Tibial artery (tissue), 4 donors: ENCODE measurements at regions of chr1 and their contacts with region 1.

Region 1: GRCh38 chr1:165914136-165914798 is 86.9 kb downstream of the UCK2 start:
- DNase-seq: peak in 1 of 2 donors; percentile 70
- H3K4me3 ChIP-seq: no peak overlapping the region
- H3K27ac ChIP-seq: no peak overlapping the region
- H3K4me1 ChIP-seq: peaks cover 0 to 5% (median 2%) of the 10 kb centered on the region in 4 donors
- H3K27me3 ChIP-seq: no peaks in the 10 kb centered on the region
- CTCF ChIP-seq: peak; percentile 84 to 92

Region 2: DNA sequence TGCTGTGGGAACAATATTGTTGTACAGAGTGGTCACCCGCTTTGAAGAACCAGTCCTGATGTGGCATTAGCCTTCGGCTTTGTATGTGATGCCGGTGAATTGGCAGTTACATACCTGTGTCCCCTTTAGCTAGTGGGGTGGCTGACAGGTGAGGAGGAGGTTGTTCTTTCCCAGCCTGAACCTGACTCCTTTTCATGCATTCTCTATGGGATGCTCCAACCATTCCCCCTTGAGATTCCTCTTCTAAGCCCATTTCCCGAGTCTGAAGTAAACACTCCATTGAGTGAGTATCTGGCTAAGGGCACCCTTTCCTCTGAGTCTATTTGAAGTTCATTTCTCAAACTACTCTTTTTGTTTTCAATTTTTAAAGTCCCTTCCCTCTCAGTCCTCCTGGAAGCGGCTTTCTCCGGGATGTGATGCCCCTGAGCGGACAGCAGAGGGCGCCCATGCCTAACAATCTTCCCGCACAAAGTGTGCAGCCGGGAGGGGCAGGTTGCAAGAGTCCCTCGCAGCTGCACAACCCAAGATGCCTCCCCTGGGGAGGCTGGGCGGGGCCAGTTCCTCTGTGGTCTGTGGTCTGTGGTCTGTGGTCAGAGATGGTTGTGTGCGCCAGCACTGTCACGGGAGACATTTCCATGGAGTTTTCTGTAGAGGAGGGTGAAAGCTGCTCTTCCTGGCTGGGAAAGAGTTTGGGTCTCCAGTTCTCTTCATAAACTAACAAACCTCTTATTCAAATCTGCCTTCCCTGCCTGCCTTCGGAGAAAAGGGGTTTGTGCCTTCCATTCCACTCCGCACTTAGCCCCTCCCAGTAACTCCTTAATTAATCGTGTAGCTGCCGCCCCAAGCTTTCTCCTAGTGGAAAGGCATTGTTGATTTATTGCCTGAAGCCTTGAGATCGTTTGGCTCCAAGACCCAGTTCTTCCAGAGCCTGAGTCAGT is 521.4 kb before region 1 on chr1:
- intact Hi-C with region 1: loop called (anchors 5 kb)
- DNase-seq: peak; percentile 91 to 92
- H3K4me3 ChIP-seq: peak overlapping the region in 1 of 2 donors; percentile 8
- H3K27ac ChIP-seq: no peak overlapping the region
- H3K4me1 ChIP-seq: peaks cover 0 to 7% (median 2%) of the 10 kb centered on the region in 4 donors
- H3K27me3 ChIP-seq: peaks cover 0 to 15% of the 10 kb centered on the region in 2 donors
- CTCF ChIP-seq: peak; percentile 90 to 93

Region 3: DNA sequence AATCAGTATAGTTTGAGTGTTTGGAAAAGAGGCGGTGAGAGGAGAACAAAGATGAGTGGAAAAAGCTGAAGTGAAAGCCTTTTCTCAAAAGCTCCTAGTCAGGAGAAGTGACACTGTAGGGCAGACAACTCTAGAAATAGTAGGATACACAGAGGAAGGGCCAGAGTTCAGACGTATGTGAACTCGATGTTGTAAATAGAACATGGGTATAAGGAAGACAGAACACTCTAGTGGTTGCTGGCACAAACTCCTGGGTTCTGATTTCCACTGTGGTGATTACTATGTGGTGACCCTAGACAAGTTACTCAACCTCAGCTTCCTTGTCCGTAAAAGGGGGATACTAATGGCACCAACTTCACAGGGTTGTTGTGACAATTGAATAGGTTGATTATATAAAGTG is 313.5 kb before region 1 on chr1:
- intact Hi-C with region 1: loop called (anchors 2 kb)
- DNase-seq: no peak
- H3K4me3 ChIP-seq: no peak overlapping the region
- H3K27ac ChIP-seq: no peak overlapping the region
- H3K4me1 ChIP-seq: peaks cover 0 to 11% (median 4%) of the 10 kb centered on the region in 4 donors
- H3K27me3 ChIP-seq: no peaks in the 10 kb centered on the region
- CTCF ChIP-seq: no peak

Region 4: GRCh38 chr1:165717918-165718515 is 196.2 kb before region 1 on chr1:
- intact Hi-C with region 1: loop called (anchors 5 kb)
- DNase-seq: no peak
- H3K4me3 ChIP-seq: no peak overlapping the region
- H3K27ac ChIP-seq: no peak overlapping the region
- H3K4me1 ChIP-seq: no peaks in the 10 kb centered on the region
- H3K27me3 ChIP-seq: no peaks in the 10 kb centered on the region
- CTCF ChIP-seq: peak; percentile 50 to 51